Dendritic cell treated with granulocyte-macrophage colony-stimulating factor and Interleukin-4, amounts not matched to agents 40 ng/mL and 50 ng/mL, for 4 days (primary cell): ENCODE measurements at regions of chr15 and their contacts with region 1.

Region 1: GRCh38 chr15:42427429-42428223 is 63.3 kb downstream of the ZNF106 start:
- H3K4me3 Mint-ChIP-seq: no peak overlapping the region
- H3K27ac Mint-ChIP-seq: no peak overlapping the region
- H3K4me1 Mint-ChIP-seq: no peaks in the 10 kb centered on the region
- H3K27me3 Mint-ChIP-seq: no peaks in the 10 kb centered on the region

Region 2: DNA sequence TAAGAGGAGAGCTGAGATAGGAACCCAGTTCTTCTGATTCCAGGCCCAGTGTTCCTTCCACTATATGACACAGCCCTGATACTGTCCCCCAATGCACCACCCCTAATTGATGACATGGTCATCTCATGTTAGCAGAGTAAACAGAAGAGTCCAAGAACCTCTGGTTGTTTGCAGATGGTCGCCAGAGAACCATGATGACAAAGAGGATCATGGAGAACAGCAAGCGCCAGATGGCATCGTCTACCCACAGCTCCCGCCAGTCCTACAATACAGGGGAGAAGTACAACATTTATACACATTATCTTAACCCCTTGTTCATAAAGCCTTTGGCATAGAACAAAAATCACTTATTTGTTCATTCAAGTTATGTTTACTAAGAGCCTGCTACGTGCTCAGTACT is 201.0 kb before region 1 on chr15:
- intact Hi-C with region 1: loop called (anchors 10 kb)
- H3K4me3 Mint-ChIP-seq: no peak overlapping the region
- H3K27ac Mint-ChIP-seq: no peak overlapping the region
- H3K4me1 Mint-ChIP-seq: no peaks in the 10 kb centered on the region
- H3K27me3 Mint-ChIP-seq: no peaks in the 10 kb centered on the region

Region 3: DNA sequence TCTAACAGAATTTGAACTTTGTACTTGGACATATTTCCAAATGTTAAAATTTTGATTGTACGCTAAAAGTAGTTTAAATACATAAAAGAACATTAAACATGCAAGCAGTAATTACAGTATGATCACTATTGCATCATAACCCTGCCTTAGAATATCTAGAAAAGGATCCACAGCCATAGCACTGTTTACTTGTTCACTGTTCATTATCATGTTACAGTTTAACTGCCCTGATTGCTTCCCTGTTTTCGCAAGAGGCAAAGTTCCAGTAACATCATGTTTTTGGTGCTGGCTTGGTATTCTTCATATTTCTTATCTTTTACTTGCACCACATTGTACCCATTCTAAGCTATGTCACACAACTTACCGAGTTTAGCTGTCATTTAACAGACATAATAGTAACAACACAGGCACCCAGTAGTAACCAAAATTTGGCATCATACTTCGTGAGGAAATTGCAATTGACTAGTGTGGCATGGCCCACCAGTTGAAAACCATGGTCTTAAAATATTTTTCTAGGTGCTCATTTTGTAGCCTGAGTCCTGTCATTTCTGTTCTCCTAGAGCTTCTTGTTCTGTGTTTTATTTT is 141.1 kb before region 1 on chr15:
- intact Hi-C with region 1: loop called (anchors 10 kb)
- H3K4me3 Mint-ChIP-seq: no peak overlapping the region
- H3K27ac Mint-ChIP-seq: no peak overlapping the region
- H3K4me1 Mint-ChIP-seq: peaks cover 5% of the 10 kb centered on the region
- H3K27me3 Mint-ChIP-seq: no peaks in the 10 kb centered on the region